Colonic mucosa (tissue), 4 donors: ENCODE measurements at regions of chr22 and their contacts with region 1.

Region 1: GRCh38 chr22:29394931-29395581 is 6.7 kb upstream of the AP1B1 start:
- DNase-seq: peak; percentile 77
- H3K4me3 ChIP-seq: no peak overlapping the region
- H3K27ac ChIP-seq: no peak overlapping the region
- H3K4me1 ChIP-seq: peaks cover 6% of the 10 kb centered on the region
- H3K27me3 ChIP-seq: no peaks in the 10 kb centered on the region
- CTCF ChIP-seq: peak; percentile 77

Region 2: GRCh38 chr22:29524440-29525191 is 129.6 kb after region 1 on chr22:
- intact Hi-C with region 1: loop called (anchors 5 kb)
- DNase-seq: peak; percentile 26
- H3K4me3 ChIP-seq: no peak overlapping the region
- H3K27ac ChIP-seq: no peak overlapping the region
- H3K4me1 ChIP-seq: no peaks in the 10 kb centered on the region
- H3K27me3 ChIP-seq: no peaks in the 10 kb centered on the region
- CTCF ChIP-seq: peak; percentile 51

Region 3: DNA sequence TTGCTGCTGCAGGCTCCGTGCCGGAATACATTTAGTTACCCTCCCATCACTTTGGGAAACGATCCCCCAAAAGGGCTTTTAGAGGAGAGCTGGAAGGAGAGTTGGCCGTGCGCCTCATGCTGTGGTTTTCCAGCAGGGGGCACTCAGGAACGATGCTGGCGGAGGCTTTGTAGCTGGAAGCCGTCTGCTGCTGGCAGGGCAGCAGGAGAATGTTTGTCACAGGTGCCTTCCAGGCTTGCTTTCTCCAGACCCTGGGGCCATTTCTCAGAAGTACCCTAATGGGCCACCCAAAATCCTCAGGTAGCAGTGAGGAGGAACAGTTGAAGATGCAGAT is 294.8 kb after region 1 on chr22:
- intact Hi-C with region 1: no loop called
- DNase-seq: peak; percentile 71
- H3K4me3 ChIP-seq: no peak overlapping the region
- H3K27ac ChIP-seq: no peak overlapping the region
- H3K4me1 ChIP-seq: no peaks in the 10 kb centered on the region
- H3K27me3 ChIP-seq: no peaks in the 10 kb centered on the region
- CTCF ChIP-seq: peak; percentile 81

Region 4: DNA sequence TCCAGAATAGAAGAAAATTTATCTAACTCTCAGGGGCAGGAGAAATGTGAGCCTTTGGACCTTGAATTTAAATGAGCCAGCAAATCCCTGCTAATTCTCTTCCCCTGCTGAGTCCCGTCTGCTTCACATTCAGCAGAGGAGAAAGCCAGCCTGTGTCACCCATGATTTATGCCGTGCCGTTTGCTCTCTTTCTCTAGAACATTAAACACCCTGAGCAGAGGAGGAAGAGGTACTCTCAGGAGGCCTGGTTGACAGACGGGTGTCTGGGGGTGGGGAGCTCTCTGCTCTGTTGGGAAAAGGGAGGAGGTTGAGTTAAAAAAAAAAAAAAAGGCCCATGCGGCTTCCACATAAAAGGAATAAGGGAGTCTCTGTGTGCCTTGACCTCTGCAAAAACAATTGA is 476.6 kb after region 1 on chr22:
- intact Hi-C with region 1: no loop called
- DNase-seq: no peak
- H3K4me3 ChIP-seq: no peak overlapping the region
- H3K27ac ChIP-seq: no peak overlapping the region
- H3K4me1 ChIP-seq: no peaks in the 10 kb centered on the region
- H3K27me3 ChIP-seq: no peaks in the 10 kb centered on the region
- CTCF ChIP-seq: no peak